Aorta (tissue), 5 donors: ENCODE measurements at regions of chr1 and their contacts with region 1.

Region 1: GRCh38 chr1:150162862-150163706 is 13.4 kb downstream of the PLEKHO1 start:
- DNase-seq: peak; percentile 94 to 96
- ATAC-seq: peak; percentile 91
- H3K4me3 ChIP-seq: no peak overlapping the region
- H3K27ac ChIP-seq: peak overlapping the region; percentile 98
- H3K4me1 ChIP-seq: no peaks in the 10 kb centered on the region
- H3K27me3 ChIP-seq: no peaks in the 10 kb centered on the region

Region 2: DNA sequence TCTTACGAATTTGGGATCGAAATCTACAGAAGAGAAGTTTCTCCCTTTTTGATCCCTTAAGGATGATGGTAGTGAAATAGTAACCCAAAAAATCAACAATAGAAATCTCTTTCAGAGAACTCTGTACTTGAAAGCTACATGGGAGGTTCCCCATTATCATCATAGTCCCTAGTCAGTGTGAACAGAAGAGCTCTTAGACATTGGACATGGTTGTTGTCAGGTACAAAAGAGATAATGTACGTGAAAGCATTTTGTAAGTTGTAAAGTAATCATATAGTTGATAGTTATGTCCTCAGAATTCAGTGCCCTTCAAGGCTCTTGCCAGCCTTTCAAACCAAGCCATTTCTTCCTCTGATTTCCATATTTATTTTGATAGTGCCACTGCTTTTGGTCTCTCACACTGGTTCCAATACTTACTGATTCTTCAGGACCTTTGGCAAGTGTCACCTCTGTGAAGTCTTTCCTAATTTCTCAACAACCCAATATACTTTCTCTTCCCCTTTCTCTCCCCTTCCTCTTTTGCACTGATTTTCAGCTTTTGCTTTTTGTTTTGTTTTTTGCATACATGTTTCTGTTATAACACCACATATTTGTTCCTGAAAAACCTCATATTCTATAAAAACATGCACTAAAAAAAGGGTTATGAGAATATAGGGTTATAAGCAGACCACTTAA is 73.1 kb before region 1 on chr1:
- intact Hi-C with region 1: loop called in 1 of 2 experiments (anchors 5 kb)
- DNase-seq: no peak
- ATAC-seq: no peak
- H3K4me3 ChIP-seq: no peak overlapping the region
- H3K27ac ChIP-seq: no peak overlapping the region
- H3K4me1 ChIP-seq: peaks cover 0 to 1% of the 10 kb centered on the region in 2 donors
- H3K27me3 ChIP-seq: no peaks in the 10 kb centered on the region

Region 3: GRCh38 chr1:150149271-150150132 is 13.6 kb before region 1 on chr1 and contains the start of gene PLEKHO1:
- intact Hi-C with region 1: loop called in 1 of 2 experiments (anchors 1 kb)
- DNase-seq: peak; percentile 95 to 96
- ATAC-seq: peak; percentile 88
- H3K4me3 ChIP-seq: peak within 1 kb of the TSS; percentile 100
- H3K27ac ChIP-seq: peak within 1 kb of the TSS; percentile 85 to 100
- H3K4me1 ChIP-seq: peaks cover 0 to 1% of the 10 kb centered on the region in 2 donors
- H3K27me3 ChIP-seq: no peaks in the 10 kb centered on the region
- total RNA-seq, gene PLEKHO1: 90.6 to 146 TPM

Region 4: DNA sequence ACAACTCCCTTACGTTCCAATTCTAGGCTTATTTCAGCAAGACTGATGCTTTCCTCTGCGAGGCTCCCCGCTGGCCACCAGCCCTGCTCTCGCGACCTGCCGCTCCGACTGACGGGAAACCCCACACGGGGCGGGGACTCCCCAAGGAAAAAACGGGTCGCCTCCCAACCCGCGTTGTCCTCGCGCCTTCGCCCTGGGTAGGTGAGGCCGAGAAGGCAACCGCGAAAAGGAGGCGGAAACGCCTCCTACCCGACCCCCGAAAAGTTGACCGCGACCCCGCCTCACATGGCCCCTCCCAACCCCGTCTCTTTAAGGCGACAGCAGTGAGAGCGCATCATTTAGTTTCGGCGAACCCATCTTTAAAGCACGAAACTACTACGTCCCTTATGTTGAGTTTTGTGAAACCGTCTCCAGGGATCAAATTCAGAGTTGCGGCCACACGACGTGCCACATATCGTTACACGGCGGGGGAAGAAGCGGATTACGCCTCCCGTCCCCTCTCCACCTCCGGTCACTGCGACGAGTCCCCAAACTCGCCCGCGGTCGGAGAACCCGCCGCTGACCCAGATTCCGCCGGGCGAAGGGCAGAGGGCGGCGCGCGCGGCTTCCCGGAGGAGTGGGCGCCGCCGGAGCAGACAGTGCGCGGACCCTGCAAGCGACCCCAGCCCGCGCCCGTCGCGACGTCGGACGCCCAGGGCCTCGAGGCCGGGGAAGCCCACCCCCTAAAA is 71.6 kb after region 1 on chr1:
- intact Hi-C with region 1: loop called in 1 of 2 experiments (anchors 5 kb)
- DNase-seq: peak; percentile 93
- ATAC-seq: peak; percentile 88
- H3K4me3 ChIP-seq: peak overlapping the region; percentile 90 to 94
- H3K27ac ChIP-seq: peak overlapping the region; percentile 77 to 93
- H3K4me1 ChIP-seq: no peaks in the 10 kb centered on the region
- H3K27me3 ChIP-seq: no peaks in the 10 kb centered on the region

Region 5: DNA sequence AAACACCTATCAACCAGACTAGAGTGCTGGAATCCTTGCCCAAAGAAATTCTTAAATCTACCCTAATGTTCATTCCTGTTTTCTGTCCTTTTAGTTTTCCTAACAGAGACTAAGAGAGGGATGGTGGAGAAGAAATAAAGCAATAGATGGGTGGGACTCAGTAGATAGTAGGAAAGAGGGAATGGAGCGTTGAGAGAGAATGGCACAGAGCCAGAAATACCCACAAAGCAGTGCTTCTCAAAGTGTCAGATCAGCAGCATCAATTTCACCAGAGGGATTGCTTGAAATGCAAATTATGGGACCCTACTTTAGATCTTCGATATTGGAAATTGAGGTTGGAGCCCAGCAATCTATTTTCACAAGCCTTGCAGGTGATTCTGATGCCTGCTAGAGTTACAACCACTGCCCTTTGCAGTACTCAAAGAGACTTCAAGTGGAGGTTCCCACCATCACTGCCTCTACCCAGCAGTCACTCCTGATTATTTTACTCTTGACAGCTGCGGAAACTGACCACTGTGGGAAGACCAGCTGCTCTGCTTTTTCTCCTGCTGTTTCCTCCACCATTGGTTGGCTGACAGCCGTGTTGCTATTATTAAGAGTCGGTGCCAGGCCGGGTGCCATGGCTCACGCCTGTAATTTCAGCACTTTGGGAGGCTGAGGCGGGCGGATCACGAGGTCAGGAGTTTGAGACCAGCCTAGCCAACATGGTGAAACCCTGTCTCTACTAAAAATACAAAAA is 146.9 kb after region 1 on chr1:
- intact Hi-C with region 1: no loop called
- DNase-seq: peak in 1 of 2 donors; percentile 17
- ATAC-seq: no peak
- H3K4me3 ChIP-seq: no peak overlapping the region
- H3K27ac ChIP-seq: no peak overlapping the region
- H3K4me1 ChIP-seq: no peaks in the 10 kb centered on the region
- H3K27me3 ChIP-seq: no peaks in the 10 kb centered on the region